ENCODE measurements at regions of chr3 and their contacts with region 1.

Region 1: GRCh38 chr3:5122030-5122740 is at the start of gene ARL8B:
- DNase-seq: peak; percentile 58
- H3K4me3 ChIP-seq: peak within 1 kb of the TSS; percentile 93
- H3K27ac ChIP-seq: peak within 1 kb of the TSS; percentile 85
- H3K27me3 ChIP-seq: no peaks in the 10 kb centered on the region
- CTCF ChIP-seq: peak; percentile 91
- polyA plus RNA-seq, gene ARL8B: 47.0 and 53.6 TPM in 2 replicates

Region 2: GRCh38 chr3:5071061-5071460 is 51.1 kb before region 1 on chr3:
- CTCF ChIA-PET with region 1: no interaction called
- POLR2A ChIA-PET with region 1: no interaction called
- DNase-seq: no peak
- H3K4me3 ChIP-seq: no peak overlapping the region
- H3K27ac ChIP-seq: no peak overlapping the region
- H3K27me3 ChIP-seq: peaks cover 11% of the 10 kb centered on the region
- CTCF ChIP-seq: no peak

Region 3: DNA sequence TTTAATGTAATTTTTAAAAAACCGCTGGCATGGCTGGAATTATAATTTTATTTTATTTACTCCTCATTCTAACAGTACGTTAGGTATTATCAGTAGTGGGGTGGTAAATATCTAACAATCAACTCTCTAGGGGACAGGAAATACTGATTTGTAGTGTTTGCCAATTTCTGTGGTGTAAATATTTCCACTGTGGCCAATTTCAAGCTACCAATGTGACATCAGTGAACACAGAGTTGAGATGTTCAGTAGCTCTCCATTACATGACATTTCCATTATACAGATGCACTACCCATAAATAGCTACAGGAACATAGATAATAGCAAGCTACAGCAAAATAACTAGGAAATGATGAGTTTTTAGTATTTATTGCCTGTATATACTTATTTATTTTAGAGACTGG is 10.1 kb before region 1 on chr3:
- CTCF ChIA-PET with region 1: interaction called, 12 read pairs
- POLR2A ChIA-PET with region 1: no interaction called
- DNase-seq: no peak
- H3K4me3 ChIP-seq: no peak overlapping the region
- H3K27ac ChIP-seq: no peak overlapping the region
- H3K27me3 ChIP-seq: no peaks in the 10 kb centered on the region
- CTCF ChIP-seq: no peak

Region 4: DNA sequence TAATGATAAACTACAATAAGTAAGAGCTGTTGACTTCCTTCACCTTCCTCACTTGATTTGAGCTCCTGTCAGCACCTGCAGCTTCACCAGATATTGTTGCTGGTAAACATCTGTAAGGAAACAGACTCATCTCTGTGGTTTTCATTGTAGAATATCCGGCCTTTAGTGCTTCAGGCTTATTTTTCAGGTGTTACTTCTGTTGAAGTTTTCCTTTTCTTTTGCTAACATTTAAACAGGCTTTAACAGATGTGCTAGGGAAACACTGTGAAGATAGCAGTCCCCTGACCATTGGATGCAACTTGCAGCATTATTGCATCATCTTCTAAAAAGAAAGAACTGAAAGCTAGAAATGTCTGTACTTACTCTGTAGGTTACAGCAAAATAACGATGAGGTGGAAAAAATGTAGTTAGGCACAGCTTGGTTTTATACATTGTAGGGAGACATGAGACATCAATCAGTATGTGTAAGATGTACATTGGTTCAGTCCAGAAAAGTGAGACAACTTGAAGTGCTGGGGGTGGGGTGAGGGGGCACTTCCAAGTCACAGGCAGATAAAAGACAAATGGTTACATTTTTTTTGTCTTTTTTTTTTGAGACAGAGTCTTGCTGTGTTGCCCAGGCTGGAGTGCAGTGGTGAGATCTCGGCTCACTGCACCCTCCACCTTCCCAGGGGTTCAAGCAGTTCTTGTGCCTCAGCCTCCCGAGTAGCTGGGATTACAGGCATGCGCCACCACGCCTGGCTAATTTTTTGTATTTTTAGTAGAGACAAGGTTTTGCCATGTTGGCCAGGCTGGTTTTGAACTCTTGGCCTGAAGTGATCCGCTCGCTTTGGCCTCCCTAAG is 75.5 kb after region 1 on chr3:
- CTCF ChIA-PET with region 1: interaction called, 3 read pairs
- POLR2A ChIA-PET with region 1: interaction called, 10 read pairs
- DNase-seq: no peak
- H3K4me3 ChIP-seq: no peak overlapping the region
- H3K27ac ChIP-seq: peak overlapping the region; percentile 77
- H3K27me3 ChIP-seq: no peaks in the 10 kb centered on the region
- CTCF ChIP-seq: no peak

Region 5: DNA sequence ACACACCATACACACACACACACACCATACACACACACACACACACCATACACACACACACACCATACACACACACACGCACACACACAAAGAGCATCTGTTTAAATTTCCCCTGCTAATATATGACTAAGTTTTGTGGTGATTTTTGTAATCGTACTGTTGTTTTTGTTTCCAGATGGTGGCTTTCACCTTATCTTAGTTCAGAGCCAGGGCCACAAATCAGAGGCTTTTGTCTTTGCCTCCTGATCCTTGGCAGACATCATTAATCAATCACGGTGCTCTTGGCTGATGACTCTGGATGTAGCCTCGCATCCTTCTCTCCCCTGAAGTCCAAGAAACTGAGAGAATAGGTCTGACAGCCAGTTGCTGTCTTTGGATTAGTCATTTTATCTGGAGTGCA is 117.4 kb after region 1 on chr3:
- CTCF ChIA-PET with region 1: no interaction called
- POLR2A ChIA-PET with region 1: no interaction called
- DNase-seq: no peak
- H3K4me3 ChIP-seq: no peak overlapping the region
- H3K27ac ChIP-seq: no peak overlapping the region
- H3K27me3 ChIP-seq: peaks cover 2% of the 10 kb centered on the region
- CTCF ChIP-seq: no peak